Activated naive CD4-positive, alpha-beta T cell treated with anti-CD3 and anti-CD28 coated beads for 36 hours (primary cell): ENCODE measurements at regions of chr18 and their contacts with region 1.

Region 1: GRCh38 chr18:32759611-32760167 is 13.1 kb downstream of the KLHL14 start:
- DNase-seq: no peak
- H3K4me3 Mint-ChIP-seq: no peak overlapping the region
- H3K27ac Mint-ChIP-seq: no peak overlapping the region
- H3K4me1 Mint-ChIP-seq: no peaks in the 10 kb centered on the region
- H3K27me3 Mint-ChIP-seq: peaks cover 9% of the 10 kb centered on the region

Region 2: GRCh38 chr18:32698153-32698552 is 61.5 kb before region 1 on chr18:
- CTCF ChIA-PET with region 1: no interaction called
- intact Hi-C with region 1: loop called (anchors 10 kb)
- DNase-seq: no peak
- H3K4me3 Mint-ChIP-seq: no peak overlapping the region
- H3K27ac Mint-ChIP-seq: no peak overlapping the region
- H3K4me1 Mint-ChIP-seq: no peaks in the 10 kb centered on the region
- H3K27me3 Mint-ChIP-seq: peaks cover 9% of the 10 kb centered on the region

Region 3: GRCh38 chr18:32742579-32742978 is 17.1 kb before region 1 on chr18:
- CTCF ChIA-PET with region 1: no interaction called
- intact Hi-C with region 1: no loop called
- DNase-seq: no peak
- H3K4me3 Mint-ChIP-seq: no peak overlapping the region
- H3K27ac Mint-ChIP-seq: no peak overlapping the region
- H3K4me1 Mint-ChIP-seq: no peaks in the 10 kb centered on the region
- H3K27me3 Mint-ChIP-seq: peaks cover 8% of the 10 kb centered on the region